CD4-positive, alpha-beta T cell (primary cell): ENCODE measurements at regions of chr6 and their contacts with region 1.

Region 1: DNA sequence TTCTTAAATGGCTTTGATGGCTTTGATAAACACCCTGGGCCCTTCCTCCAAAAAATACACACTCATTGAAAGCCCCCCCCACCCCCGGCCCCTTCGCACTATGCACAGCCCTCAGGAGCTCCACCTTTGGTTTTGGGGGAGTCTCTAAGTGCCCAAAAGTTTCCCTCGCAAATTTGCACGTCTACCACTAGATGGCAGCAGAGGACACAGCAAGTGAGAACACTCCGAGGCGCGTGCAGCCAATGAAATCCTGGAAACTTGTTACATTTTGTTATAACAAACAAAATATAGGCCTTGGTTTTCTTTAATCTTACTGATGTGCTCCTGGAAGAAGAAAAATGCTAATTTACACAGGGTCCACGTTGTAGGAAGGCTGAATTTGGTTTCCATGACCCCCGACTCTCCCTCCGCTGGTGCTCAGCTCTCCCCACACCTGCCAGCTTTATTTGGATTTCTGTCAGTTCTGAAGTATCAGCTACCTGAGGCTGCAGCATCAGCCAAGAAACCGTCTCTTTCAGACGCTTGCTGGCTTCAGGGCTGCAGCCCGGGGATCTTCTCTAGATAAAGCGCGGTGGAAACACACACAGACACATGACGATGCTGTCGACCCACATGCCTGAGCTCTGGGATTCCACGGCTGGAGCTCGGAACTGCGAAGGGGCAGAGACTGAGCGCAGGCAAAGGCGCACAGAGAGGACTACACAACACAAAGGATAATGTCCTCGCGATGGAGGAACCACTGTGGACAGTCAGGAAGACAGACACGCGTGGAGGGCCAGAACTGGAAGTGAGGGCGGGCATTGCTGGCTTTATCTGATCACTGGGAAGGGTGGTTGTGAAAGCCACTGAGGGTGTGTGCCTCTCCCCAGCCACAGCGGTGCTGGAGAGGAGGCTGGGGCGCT is 148.4 kb upstream of the RPS6KA2 start:
- DNase-seq: peak; percentile 36 to 90 (median 58)
- ATAC-seq: peak; percentile 88
- H3K4me3 ChIP-seq: no peak overlapping the region
- H3K4me3 Mint-ChIP-seq: no peak overlapping the region
- H3K27ac ChIP-seq: no peak overlapping the region
- H3K27ac Mint-ChIP-seq: no peak overlapping the region
- H3K4me1 ChIP-seq: peaks cover 8% of the 10 kb centered on the region
- H3K4me1 Mint-ChIP-seq: peaks cover 9% of the 10 kb centered on the region
- H3K27me3 ChIP-seq: no peaks in the 10 kb centered on the region
- H3K27me3 Mint-ChIP-seq: peaks cover 4% of the 10 kb centered on the region
- CTCF ChIP-seq: peak; percentile 88

Region 2: GRCh38 chr6:166989427-166990032 is 214.1 kb after region 1 on chr6:
- CTCF ChIA-PET with region 1: interaction called, 18 read pairs
- POLR2A ChIA-PET with region 1: interaction called, 5 read pairs
- intact Hi-C with region 1: loop called in 1 of 2 experiments (anchors 1 kb)
- DNase-seq: peak in 12 of 14 experiments; percentile 23 to 79 (median 48)
- ATAC-seq: peak; percentile 89
- H3K4me3 ChIP-seq: no peak overlapping the region
- H3K4me3 Mint-ChIP-seq: no peak overlapping the region
- H3K27ac ChIP-seq: no peak overlapping the region
- H3K27ac Mint-ChIP-seq: peak overlapping the region; percentile 39
- H3K4me1 ChIP-seq: peaks cover 5% of the 10 kb centered on the region
- H3K4me1 Mint-ChIP-seq: peaks cover 21% of the 10 kb centered on the region
- H3K27me3 ChIP-seq: no peaks in the 10 kb centered on the region
- H3K27me3 Mint-ChIP-seq: no peaks in the 10 kb centered on the region
- CTCF ChIP-seq: peak; percentile 44

Region 3: DNA sequence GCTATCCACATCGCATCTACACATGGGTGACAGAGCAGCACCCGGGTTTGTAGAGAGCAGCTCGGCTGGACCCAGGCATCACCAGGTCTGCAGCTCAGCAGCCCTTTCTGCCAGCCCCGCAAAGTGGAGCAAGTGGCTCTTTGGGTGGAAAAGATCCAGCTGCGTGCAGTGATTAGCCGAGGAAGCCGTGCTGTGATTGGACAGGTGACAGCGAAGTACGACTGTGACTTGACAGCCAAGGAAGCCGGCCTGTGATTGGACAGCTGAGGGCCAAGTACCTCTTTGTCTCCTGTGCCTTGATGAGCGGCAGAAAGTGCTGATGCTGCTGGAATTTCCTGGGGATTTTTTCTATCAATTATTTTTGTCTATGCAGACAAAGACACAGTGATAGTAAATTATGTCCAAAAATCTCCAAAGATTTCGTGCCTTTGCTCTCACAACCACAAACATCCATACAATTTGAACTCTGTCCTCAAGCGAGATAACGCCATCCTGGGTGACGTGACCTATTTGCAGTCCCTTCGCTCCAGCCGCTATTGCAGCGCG is 444.6 kb after region 1 on chr6:
- CTCF ChIA-PET with region 1: no interaction called
- POLR2A ChIA-PET with region 1: no interaction called
- intact Hi-C with region 1: loop called in 1 of 2 experiments (anchors 2 kb)
- DNase-seq: no peak
- ATAC-seq: no peak
- H3K4me3 ChIP-seq: no peak overlapping the region
- H3K4me3 Mint-ChIP-seq: no peak overlapping the region
- H3K27ac ChIP-seq: no peak overlapping the region
- H3K27ac Mint-ChIP-seq: no peak overlapping the region
- H3K4me1 ChIP-seq: no peaks in the 10 kb centered on the region
- H3K4me1 Mint-ChIP-seq: peaks cover 4% of the 10 kb centered on the region
- H3K27me3 ChIP-seq: peaks cover 0 to under 1% of the 10 kb centered on the region in 2 experiments
- H3K27me3 Mint-ChIP-seq: no peaks in the 10 kb centered on the region
- CTCF ChIP-seq: no peak

Region 4: DNA sequence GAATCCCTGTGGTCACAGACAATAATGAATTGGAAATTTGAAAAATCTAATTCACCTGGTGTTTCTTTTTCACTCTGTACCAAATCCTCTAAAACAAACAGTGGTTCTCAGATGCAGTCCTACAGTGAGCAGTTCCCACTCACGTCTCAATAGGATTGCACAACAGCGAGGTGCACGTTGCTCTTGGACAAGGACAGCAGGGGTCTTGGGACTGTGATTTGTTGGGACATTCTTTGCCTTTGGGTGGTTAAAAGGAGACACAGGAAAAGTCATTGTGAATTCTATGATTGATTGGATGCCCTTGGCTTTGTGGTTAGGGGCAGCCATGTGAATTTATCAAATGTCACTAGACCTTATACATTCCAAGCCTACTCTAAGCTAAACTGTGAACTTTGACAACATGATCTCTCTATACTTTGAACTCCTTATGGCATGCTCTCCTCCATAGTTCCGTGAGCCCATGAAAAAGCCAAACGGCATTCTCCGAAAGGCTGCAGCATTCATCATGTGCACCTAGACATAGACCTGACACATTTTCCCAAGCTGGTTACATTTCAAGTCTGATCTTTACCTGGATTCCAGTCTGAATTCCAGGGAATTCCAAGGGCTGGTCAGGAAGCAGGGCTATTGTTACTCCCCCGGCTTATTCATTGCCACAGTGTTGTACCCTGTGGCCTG is 516.3 kb after region 1 on chr6:
- CTCF ChIA-PET with region 1: no interaction called
- POLR2A ChIA-PET with region 1: no interaction called
- intact Hi-C with region 1: loop called (anchors 2 to 5 kb)
- DNase-seq: no peak
- ATAC-seq: no peak
- H3K4me3 ChIP-seq: no peak overlapping the region
- H3K4me3 Mint-ChIP-seq: no peak overlapping the region
- H3K27ac ChIP-seq: no peak overlapping the region
- H3K27ac Mint-ChIP-seq: no peak overlapping the region
- H3K4me1 ChIP-seq: no peaks in the 10 kb centered on the region
- H3K4me1 Mint-ChIP-seq: peaks cover 3% of the 10 kb centered on the region
- H3K27me3 ChIP-seq: no peaks in the 10 kb centered on the region
- H3K27me3 Mint-ChIP-seq: peaks cover 4% of the 10 kb centered on the region
- CTCF ChIP-seq: no peak